ENCODE measurements at regions of chr17 and their contacts with region 1.

Region 1: GRCh38 chr17:39777534-39778365 is 40.0 kb downstream of the GRB7 start:
- DNase-seq: peak in 2 of 10 donors; percentile 35 to 41
- ATAC-seq: peak; percentile 61 to 67
- H3K4me3 Mint-ChIP-seq: peak overlapping the region; percentile 81 to 96 (median 91)
- H3K27ac Mint-ChIP-seq: peak overlapping the region; percentile 89 to 100 (median 95)
- H3K4me1 Mint-ChIP-seq: peaks cover 48 to 91% (median 85%) of the 10 kb centered on the region in 4 donors
- H3K27me3 Mint-ChIP-seq: no peaks in the 10 kb centered on the region

Region 2: GRCh38 chr17:39794249-39794970 is 16.7 kb after region 1 on chr17:
- POLR2A ChIA-PET with region 1: interaction called, 64 read pairs
- DNase-seq: peak in 4 of 10 donors; percentile 32 to 53 (median 42)
- ATAC-seq: peak; percentile 69 to 79
- H3K4me3 Mint-ChIP-seq: peak overlapping the region; percentile 60 to 86 (median 74)
- H3K27ac Mint-ChIP-seq: peak overlapping the region; percentile 84 to 98 (median 94)
- H3K4me1 Mint-ChIP-seq: peaks cover 46 to 87% (median 81%) of the 10 kb centered on the region in 4 donors
- H3K27me3 Mint-ChIP-seq: no peaks in the 10 kb centered on the region

Region 3: GRCh38 chr17:39813631-39814030 is 35.9 kb after region 1 on chr17:
- POLR2A ChIA-PET with region 1: interaction called, 19 read pairs
- DNase-seq: peak; percentile 33 to 84 (median 71)
- ATAC-seq: peak; percentile 93 to 97
- H3K4me3 Mint-ChIP-seq: peak overlapping the region; percentile 71 to 87 (median 79)
- H3K27ac Mint-ChIP-seq: peak overlapping the region; percentile 89 to 98 (median 95)
- H3K4me1 Mint-ChIP-seq: peaks cover 32 to 84% (median 75%) of the 10 kb centered on the region in 4 donors
- H3K27me3 Mint-ChIP-seq: no peaks in the 10 kb centered on the region

Region 4: GRCh38 chr17:39863918-39864746 is 86.4 kb after region 1 on chr17 and contains the start of gene IKZF3:
- POLR2A ChIA-PET with region 1: interaction called, 19 read pairs
- DNase-seq: peak; percentile 71 to 87 (median 80)
- ATAC-seq: peak; percentile 75 to 85
- H3K4me3 Mint-ChIP-seq: peak within 1 kb of the TSS; percentile 92 to 99 (median 96)
- H3K27ac Mint-ChIP-seq: peak within 1 kb of the TSS; percentile 96 to 98 (median 98)
- H3K4me1 Mint-ChIP-seq: peaks cover 26 to 74% (median 64%) of the 10 kb centered on the region in 4 donors
- H3K27me3 Mint-ChIP-seq: no peaks in the 10 kb centered on the region
- polyA plus RNA-seq, gene IKZF3: 18.8 to 59.2 (median 21.5) TPM